ENCODE measurements at regions of chr7 and their contacts with region 1.

Region 1: GRCh38 chr7:103116991-103117390 is 31.9 kb downstream of the NAPEPLD start:
- DNase-seq: no peak
- ATAC-seq: no peak
- H3K4me3 Mint-ChIP-seq: no peak overlapping the region
- H3K27ac Mint-ChIP-seq: no peak overlapping the region
- H3K4me1 Mint-ChIP-seq: no peaks in the 10 kb centered on the region
- H3K27me3 Mint-ChIP-seq: no peaks in the 10 kb centered on the region
- CTCF ChIP-seq: no peak

Region 2: DNA sequence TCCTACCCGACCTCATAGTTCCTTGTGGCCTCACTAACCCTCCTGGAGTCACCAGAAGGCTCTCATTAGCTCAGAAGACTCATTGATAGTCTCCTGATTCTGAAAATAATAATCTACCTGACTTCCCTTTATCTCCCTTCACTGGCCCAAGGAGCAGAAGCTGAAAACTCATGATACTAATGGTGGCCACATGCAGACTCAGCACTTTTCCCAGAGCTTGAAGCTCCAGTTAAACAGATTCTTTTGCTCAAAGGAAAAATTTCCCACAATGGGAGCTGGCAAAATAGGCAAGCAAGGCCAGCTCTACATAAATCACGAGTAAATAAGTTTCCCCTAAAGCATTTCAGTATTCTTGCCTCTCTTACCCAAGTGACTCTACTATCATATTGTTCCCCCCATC is 23.7 kb after region 1 on chr7:
- CTCF ChIA-PET with region 1: no interaction called
- POLR2A ChIA-PET with region 1: interaction called, 19 read pairs
- intact Hi-C with region 1: no loop called
- DNase-seq: no peak
- ATAC-seq: no peak
- H3K4me3 Mint-ChIP-seq: no peak overlapping the region
- H3K27ac Mint-ChIP-seq: no peak overlapping the region
- H3K4me1 Mint-ChIP-seq: peaks cover 3% of the 10 kb centered on the region
- H3K27me3 Mint-ChIP-seq: no peaks in the 10 kb centered on the region
- CTCF ChIP-seq: no peak

Measured in activated B cell treated with CpG ODN at 0.5 μM for 24 hours (primary cell).